H1 (cell line): ENCODE measurements at regions of chr7 and their contacts with region 1.

Region 1: DNA sequence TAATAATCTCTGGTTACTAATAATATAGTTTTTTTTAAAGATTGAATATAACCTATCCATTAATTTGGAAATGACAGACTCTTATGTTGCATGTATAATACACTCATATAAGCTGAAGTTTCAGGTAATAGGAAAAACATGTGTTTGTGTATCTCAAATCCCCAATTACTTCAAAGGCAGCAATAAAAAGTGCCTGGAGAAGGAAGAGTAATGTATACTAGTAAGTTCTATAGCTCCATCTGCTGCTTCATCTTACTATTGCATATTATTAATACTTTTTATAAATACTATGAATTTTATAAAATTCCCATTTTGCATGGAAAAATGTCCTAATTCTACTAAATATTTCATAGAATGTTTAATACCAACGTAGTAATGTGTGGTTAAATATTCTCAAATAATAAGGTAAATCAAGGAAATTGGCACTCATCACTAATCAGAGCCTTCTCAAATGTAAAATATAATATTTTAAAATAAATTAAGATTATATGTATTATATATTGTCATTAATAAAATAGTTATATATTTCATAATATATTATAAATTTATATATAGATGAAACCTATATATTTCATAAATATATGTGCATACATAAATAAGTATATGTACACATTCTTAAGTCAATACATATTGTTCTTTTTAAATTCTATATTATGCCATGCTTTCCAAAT is 311.9 kb downstream of the HGF start:
- DNase-seq: no peak
- H3K4me3 ChIP-seq: no peak overlapping the region
- H3K27ac ChIP-seq: no peak overlapping the region
- H3K4me1 ChIP-seq: no peaks in the 10 kb centered on the region
- H3K27me3 ChIP-seq: no peaks in the 10 kb centered on the region
- CTCF ChIP-seq: no peak; a peak in 1 of 4 replicates
- EP300 ChIP-seq: no peak
- POLR2A ChIP-seq: no peak
- RAD21 ChIP-seq: peak in 1 of 2 experiments; percentile 36; a peak in 3 of 4 replicates

Region 2: DNA sequence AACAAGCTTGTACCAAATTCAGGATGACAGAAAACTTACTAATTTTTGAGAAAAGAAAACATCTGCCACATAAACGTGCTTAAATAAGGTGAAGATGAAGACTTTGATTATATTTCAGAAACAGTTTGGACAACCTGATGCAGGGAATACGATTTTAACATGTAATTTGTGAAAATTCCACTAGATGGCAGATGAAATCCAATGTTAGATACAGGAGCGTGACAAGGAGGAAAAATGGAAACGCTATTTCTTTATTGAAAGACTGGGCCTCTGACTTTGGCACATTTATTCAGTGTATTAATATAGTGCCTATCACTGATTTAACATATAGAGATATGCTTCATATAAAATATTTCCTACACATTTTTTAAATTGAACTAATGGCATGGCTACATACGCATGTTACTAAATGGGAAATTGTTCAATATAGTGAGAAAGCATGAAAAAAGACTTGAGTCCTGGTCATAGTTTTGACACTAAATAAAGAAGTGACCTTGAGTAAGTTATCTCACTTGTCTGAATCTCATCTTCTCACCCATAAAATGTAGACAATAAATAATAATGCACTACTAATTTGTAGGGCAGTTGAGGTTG is 758.8 kb before region 1 on chr7:
- CTCF ChIA-PET with region 1: interaction called, 10 read pairs
- POLR2A ChIA-PET with region 1: no interaction called
- DNase-seq: no peak
- H3K4me3 ChIP-seq: no peak overlapping the region
- H3K27ac ChIP-seq: no peak overlapping the region
- H3K4me1 ChIP-seq: no peaks in the 10 kb centered on the region
- H3K27me3 ChIP-seq: no peaks in the 10 kb centered on the region
- CTCF ChIP-seq: peak in 2 of 3 experiments; percentile 51 to 52; a peak in 2 of 4 replicates
- EP300 ChIP-seq: no peak
- POLR2A ChIP-seq: no peak
- RAD21 ChIP-seq: peak; percentile 91 to 92

Region 3: GRCh38 chr7:81221527-81222217 is 236.3 kb before region 1 on chr7:
- CTCF ChIA-PET with region 1: no interaction called
- POLR2A ChIA-PET with region 1: no interaction called
- DNase-seq: no peak
- H3K4me3 ChIP-seq: no peak overlapping the region
- H3K27ac ChIP-seq: no peak overlapping the region
- H3K4me1 ChIP-seq: no peaks in the 10 kb centered on the region
- H3K27me3 ChIP-seq: no peaks in the 10 kb centered on the region
- CTCF ChIP-seq: no peak
- EP300 ChIP-seq: no peak
- POLR2A ChIP-seq: no peak
- RAD21 ChIP-seq: no peak